Panc1 (cell line): ENCODE measurements at regions of chr2 and their contacts with region 1.

Region 1: GRCh38 chr2:6352906-6353515 is 512.7 kb downstream of the CMPK2 start:
- DNase-seq: no peak
- ATAC-seq: no peak
- H3K4me3 ChIP-seq: no peak overlapping the region
- H3K27ac ChIP-seq: no peak overlapping the region
- H3K4me1 ChIP-seq: no peaks in the 10 kb centered on the region
- H3K27me3 ChIP-seq: no peaks in the 10 kb centered on the region
- CTCF ChIP-seq: peak; percentile 52

Region 2: GRCh38 chr2:6773007-6773693 is 420.1 kb after region 1 on chr2:
- CTCF ChIA-PET with region 1: no interaction called
- POLR2A ChIA-PET with region 1: no interaction called
- in situ Hi-C with region 1: no loop called
- intact Hi-C with region 1: loop called (anchors 10 kb)
- DNase-seq: peak; percentile 22
- ATAC-seq: peak; percentile 97
- H3K4me3 ChIP-seq: peak overlapping the region in 1 of 2 experiments; percentile 29; a peak in 1 of 4 replicates
- H3K27ac ChIP-seq: no peak overlapping the region
- H3K4me1 ChIP-seq: no peaks in the 10 kb centered on the region
- H3K27me3 ChIP-seq: no peaks in the 10 kb centered on the region; the same call in 1 of the 2 replicates
- CTCF ChIP-seq: peak; percentile 93